ENCODE measurements at regions of chr1 and their contacts with region 1.

Region 1: DNA sequence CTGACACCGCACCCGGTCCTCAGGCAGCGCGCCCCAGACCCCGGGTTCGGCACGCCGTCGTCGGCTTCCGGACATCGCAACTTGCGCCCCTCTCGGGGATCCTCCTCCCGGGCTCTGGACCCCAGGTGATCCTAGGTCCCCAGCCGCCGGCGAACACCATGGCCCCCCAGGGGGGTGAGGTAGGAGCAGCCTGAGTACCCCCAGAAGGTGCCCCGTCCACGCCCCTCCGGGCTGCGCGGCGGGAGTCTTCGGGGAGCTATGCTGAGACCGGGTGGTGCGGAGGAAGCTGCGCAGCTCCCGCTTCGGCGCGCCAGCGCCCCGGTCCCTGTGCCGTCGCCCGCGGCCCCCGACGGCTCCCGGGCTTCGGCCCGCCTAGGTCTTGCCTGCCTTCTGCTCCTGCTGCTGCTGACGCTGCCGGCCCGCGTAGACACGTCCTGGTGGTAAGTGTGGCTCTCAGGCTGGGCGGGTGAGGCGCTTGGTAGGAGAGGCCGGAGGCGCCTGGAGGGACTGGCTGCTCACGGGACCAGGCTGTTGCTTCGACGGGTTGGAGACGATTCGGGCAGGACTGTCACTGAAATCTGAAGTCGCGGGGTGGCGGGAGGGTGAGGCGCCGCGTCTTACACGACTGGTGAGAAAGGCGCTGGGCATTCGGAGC is 367 bp downstream of the WNT2B start:
- DNase-seq: no peak
- H3K4me3 ChIP-seq: peak overlapping the region; percentile 56
- H3K27ac ChIP-seq: no peak overlapping the region
- H3K27me3 ChIP-seq: peaks cover 53% of the 10 kb centered on the region
- CTCF ChIP-seq: no peak

Region 2: GRCh38 chr1:112522621-112523020 is 13.5 kb after region 1 on chr1:
- CTCF ChIA-PET with region 1: interaction called, 10 read pairs
- POLR2A ChIA-PET with region 1: interaction called, 30 read pairs
- DNase-seq: peak; percentile 86
- H3K4me3 ChIP-seq: no peak overlapping the region
- H3K27ac ChIP-seq: peak overlapping the region; percentile 61
- H3K27me3 ChIP-seq: peaks cover 30% of the 10 kb centered on the region
- CTCF ChIP-seq: no peak

Region 3: DNA sequence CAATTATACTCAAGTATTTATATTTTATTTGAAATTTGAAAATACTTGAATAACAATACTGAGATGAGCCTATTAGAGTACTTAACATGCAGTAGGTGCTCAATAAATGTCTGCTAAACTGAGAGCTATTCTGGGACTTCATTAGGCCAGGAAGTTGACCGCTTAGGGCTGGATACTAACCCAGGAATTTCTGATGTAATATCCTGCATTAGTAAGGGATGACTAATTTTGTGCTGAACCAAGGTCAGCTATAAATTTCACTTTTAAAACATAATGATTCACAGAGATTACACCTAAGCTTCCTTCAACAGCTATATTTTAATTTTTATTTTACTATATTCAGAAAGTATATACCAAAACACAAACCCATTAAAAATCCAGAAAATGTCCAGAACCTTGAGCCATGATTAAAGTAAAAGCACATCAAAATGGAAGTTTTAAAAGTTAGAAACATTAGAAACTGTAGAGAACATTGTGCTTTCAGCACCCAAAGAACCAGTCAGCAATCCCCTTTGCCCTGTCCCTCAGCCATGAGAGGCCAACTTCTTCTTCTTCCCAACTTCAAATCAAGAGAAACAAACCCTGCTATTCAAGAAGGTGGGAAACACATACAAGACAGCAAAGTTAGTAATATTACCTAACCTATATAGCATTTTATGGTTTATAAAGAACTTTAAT is 35.0 kb after region 1 on chr1:
- CTCF ChIA-PET with region 1: interaction called, 3 read pairs
- POLR2A ChIA-PET with region 1: interaction called, 14 read pairs
- DNase-seq: peak; percentile 63
- H3K4me3 ChIP-seq: no peak overlapping the region
- H3K27ac ChIP-seq: peak overlapping the region; percentile 83
- H3K27me3 ChIP-seq: no peaks in the 10 kb centered on the region
- CTCF ChIP-seq: no peak

Region 4: GRCh38 chr1:112579801-112580510 is 70.8 kb after region 1 on chr1:
- CTCF ChIA-PET with region 1: no interaction called
- POLR2A ChIA-PET with region 1: no interaction called
- DNase-seq: peak; percentile 29
- H3K4me3 ChIP-seq: no peak overlapping the region
- H3K27ac ChIP-seq: peak overlapping the region; percentile 42
- H3K27me3 ChIP-seq: no peaks in the 10 kb centered on the region
- CTCF ChIP-seq: no peak